Activated CD4-positive, alpha-beta T cell treated with anti-CD3 and anti-CD28 coated beads for 36 hours (primary cell): ENCODE measurements at regions of chr19 and their contacts with region 1.

Region 1: GRCh38 chr19:49528211-49528771 is 488 bp downstream of the RCN3 start:
- DNase-seq: peak; percentile 29
- ATAC-seq: no peak
- H3K4me3 Mint-ChIP-seq: peak overlapping the region; percentile 73
- H3K27ac Mint-ChIP-seq: no peak overlapping the region
- H3K4me1 Mint-ChIP-seq: peaks cover 18% of the 10 kb centered on the region
- H3K27me3 Mint-ChIP-seq: no peaks in the 10 kb centered on the region

Region 2: GRCh38 chr19:49502866-49503581 is 25.3 kb before region 1 on chr19:
- CTCF ChIA-PET with region 1: interaction called, 5 read pairs
- POLR2A ChIA-PET with region 1: interaction called, 3 read pairs
- intact Hi-C with region 1: loop called in 1 of 2 experiments (anchors 2 kb)
- DNase-seq: peak; percentile 65
- ATAC-seq: peak; percentile 28
- H3K4me3 Mint-ChIP-seq: no peak overlapping the region
- H3K27ac Mint-ChIP-seq: no peak overlapping the region
- H3K4me1 Mint-ChIP-seq: peaks cover 44% of the 10 kb centered on the region
- H3K27me3 Mint-ChIP-seq: no peaks in the 10 kb centered on the region

Region 3: DNA sequence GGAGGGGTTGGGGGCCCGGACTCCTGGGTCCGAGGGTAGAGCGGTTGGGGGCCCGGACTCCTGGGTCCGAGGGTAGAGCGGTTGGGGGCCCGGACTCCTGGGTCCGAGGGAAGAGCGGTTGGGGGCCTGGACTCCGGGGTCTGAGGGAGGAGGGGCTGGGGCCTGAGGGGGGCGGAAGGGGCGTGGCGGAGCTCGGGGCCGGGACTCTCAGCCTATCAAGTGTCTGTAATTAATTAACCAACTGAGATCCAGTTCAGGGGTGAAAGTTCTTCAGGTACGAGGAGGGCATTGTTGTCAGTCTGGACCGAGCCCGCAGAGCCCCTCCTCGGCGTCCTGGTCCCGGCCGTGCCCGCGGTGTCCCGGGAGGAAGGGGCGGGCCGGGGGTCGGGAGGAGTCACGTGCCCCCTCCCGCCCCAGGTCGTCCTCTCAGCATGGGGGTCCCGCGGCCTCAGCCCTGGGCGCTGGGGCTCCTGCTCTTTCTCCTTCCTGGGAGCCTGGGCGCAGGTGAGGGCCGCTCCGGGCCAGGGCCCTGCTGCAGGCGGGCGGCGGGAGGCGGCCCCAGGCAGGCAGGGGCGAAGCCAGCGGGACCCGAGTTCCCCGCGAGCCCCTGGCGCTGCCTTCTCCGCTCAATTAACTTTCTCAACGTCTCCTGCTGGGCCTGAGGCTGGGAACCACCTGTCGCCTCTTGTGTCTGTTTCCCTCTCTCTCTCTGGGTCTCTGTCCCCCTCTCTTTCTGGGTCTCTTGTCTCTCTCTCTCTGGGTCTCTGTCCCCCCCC is 15.1 kb before region 1 on chr19:
- CTCF ChIA-PET with region 1: interaction called, 4 read pairs
- POLR2A ChIA-PET with region 1: interaction called, 3 read pairs
- intact Hi-C with region 1: loop called in 1 of 2 experiments (anchors 1 kb)
- DNase-seq: peak; percentile 55
- ATAC-seq: peak; percentile 77
- H3K4me3 Mint-ChIP-seq: peak overlapping the region; percentile 76
- H3K27ac Mint-ChIP-seq: peak overlapping the region; percentile 67
- H3K4me1 Mint-ChIP-seq: peaks cover 36% of the 10 kb centered on the region
- H3K27me3 Mint-ChIP-seq: no peaks in the 10 kb centered on the region

Region 4: DNA sequence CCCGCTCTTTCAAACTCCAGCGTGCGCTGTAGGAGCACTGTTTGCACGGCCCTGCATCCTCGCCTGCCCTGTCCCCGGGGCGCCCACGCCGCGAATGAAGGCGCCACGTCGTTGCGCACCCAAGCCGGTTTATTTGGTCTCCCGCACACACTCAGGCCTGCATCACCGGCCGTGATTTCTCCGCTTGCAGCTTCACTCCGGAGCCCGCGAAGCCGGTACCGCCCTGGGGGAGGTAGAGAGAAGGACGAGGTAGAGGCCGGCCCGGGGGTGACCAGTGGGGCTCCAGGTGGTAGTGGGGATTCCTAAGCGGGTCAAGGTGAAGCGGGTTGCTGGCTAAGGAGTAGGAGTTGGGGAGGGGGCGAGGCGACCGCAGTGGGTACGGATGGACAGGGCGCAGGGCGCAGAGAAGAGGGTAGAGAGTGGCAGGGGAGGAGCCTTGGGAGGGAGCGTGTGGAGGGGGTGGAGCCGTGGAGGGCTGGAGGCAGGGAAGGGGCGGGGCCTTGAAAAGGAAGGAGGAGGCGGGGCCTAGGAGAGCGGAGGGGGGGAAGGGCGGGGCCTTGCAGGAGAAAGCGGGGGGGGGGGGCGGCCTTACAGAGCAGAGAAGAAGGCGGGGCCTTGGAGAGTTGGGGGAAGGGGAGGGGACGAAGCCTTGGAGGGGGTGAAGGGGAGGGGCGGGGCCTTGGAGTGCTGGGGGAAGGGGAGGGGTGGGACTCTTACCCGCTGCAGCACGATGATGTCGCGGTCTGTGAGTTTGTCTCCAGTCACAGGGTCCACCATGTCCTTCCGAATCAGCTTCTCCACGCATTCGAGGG is 27.5 kb after region 1 on chr19:
- CTCF ChIA-PET with region 1: interaction called, 4 read pairs
- POLR2A ChIA-PET with region 1: interaction called, 3 read pairs
- intact Hi-C with region 1: loop called in 1 of 2 experiments (anchors 1 kb)
- DNase-seq: peak; percentile 92
- ATAC-seq: peak; percentile 62
- H3K4me3 Mint-ChIP-seq: peak overlapping the region; percentile 35
- H3K27ac Mint-ChIP-seq: peak overlapping the region; percentile 98
- H3K4me1 Mint-ChIP-seq: peaks cover 82% of the 10 kb centered on the region
- H3K27me3 Mint-ChIP-seq: no peaks in the 10 kb centered on the region

Region 5: GRCh38 chr19:49746206-49747091 is 218.2 kb after region 1 on chr19:
- CTCF ChIA-PET with region 1: no interaction called
- POLR2A ChIA-PET with region 1: no interaction called
- intact Hi-C with region 1: no loop called
- DNase-seq: peak; percentile 82
- ATAC-seq: peak; percentile 82
- H3K4me3 Mint-ChIP-seq: no peak overlapping the region
- H3K27ac Mint-ChIP-seq: no peak overlapping the region
- H3K4me1 Mint-ChIP-seq: no peaks in the 10 kb centered on the region
- H3K27me3 Mint-ChIP-seq: peaks cover 2% of the 10 kb centered on the region